ENCODE measurements at regions of chr1 and their contacts with region 1.

Region 1: GRCh38 chr1:41516168-41517061 is 31.9 kb upstream of the EDN2 start:
- DNase-seq: peak; percentile 87
- ATAC-seq: peak; percentile 92
- H3K4me3 Mint-ChIP-seq: peak overlapping the region; percentile 19
- H3K27ac Mint-ChIP-seq: peak overlapping the region; percentile 16
- H3K4me1 Mint-ChIP-seq: peaks cover 11% of the 10 kb centered on the region
- H3K27me3 Mint-ChIP-seq: no peaks in the 10 kb centered on the region

Region 2: DNA sequence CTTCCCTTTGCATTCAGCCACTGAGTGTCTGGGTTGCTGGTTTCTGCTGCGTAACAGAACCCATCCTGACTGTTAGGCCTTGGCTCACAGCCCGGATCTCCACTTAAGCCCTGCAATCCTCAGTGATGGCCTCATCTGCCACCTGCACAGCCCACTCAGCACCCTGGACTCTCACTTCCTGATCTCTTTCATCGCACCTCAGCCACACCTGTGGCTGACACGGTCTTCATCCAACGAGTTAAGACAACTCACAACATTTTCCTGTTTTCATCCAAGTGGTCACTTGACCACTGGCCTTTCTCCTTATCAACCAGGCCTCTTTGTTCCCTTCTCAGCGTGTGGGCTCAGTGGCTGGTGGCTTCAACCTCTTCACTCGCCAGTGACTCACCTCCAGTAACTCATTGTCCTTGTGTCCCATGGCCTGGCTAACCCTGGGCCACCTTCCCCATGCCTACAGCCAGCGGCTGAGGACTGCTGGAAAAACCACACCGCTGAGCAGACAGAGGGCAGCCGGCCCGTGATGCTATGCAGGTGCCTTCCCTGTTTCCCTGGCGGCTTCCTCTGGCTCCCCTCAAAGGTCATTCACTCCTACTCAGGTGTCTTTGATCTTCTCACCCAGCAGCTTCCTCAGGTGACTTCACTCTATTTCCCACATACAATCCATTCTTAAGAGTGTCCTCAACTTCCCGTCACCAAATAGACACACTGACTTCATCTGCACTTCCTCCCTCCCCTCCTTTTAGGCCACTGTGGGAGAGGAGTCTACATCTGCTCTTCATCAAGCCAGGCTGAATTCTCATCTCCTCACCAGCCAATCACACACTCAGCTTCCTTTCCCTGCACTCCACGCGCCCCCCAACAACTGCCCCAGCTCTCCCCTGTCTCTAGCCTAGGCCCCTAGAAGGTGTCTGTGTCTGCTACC is 12.0 kb before region 1 on chr1:
- CTCF ChIA-PET with region 1: interaction called, 12 read pairs
- POLR2A ChIA-PET with region 1: no interaction called
- intact Hi-C with region 1: no loop called
- DNase-seq: no peak
- ATAC-seq: peak; percentile 45
- H3K4me3 Mint-ChIP-seq: no peak overlapping the region
- H3K27ac Mint-ChIP-seq: peak overlapping the region; percentile 40
- H3K4me1 Mint-ChIP-seq: peaks cover 10% of the 10 kb centered on the region
- H3K27me3 Mint-ChIP-seq: no peaks in the 10 kb centered on the region

Region 3: GRCh38 chr1:41573785-41574713 is 57.6 kb after region 1 on chr1:
- CTCF ChIA-PET with region 1: no interaction called
- POLR2A ChIA-PET with region 1: no interaction called
- intact Hi-C with region 1: no loop called
- DNase-seq: peak; percentile 90
- ATAC-seq: peak; percentile 93
- H3K4me3 Mint-ChIP-seq: no peak overlapping the region
- H3K27ac Mint-ChIP-seq: peak overlapping the region; percentile 17
- H3K4me1 Mint-ChIP-seq: peaks cover 41% of the 10 kb centered on the region
- H3K27me3 Mint-ChIP-seq: no peaks in the 10 kb centered on the region

Region 4: DNA sequence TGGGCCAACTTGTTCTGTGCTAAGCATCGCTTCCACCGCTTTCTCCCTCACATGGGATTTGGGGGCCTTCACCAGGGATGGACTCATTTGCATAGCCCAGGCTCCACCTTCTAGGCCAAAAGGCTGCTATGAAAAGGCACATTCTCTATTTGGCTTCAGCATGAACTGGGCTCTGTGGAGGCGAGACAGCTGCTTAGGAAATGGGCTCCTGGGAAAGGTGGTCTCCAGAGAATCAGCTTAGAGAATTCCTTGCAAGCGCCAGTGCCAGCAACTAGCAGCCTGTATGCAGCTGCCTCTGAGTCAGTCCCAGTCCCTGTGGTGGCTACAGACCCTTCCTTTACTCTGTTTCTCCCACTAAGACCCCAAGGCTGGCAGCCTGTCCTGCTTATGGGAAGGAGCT is 187.8 kb after region 1 on chr1:
- CTCF ChIA-PET with region 1: no interaction called
- POLR2A ChIA-PET with region 1: no interaction called
- intact Hi-C with region 1: no loop called
- DNase-seq: no peak
- ATAC-seq: no peak
- H3K4me3 Mint-ChIP-seq: no peak overlapping the region
- H3K27ac Mint-ChIP-seq: no peak overlapping the region
- H3K4me1 Mint-ChIP-seq: peaks cover 11% of the 10 kb centered on the region
- H3K27me3 Mint-ChIP-seq: no peaks in the 10 kb centered on the region

Region 5: GRCh38 chr1:41795205-41795762 is 278.9 kb after region 1 on chr1:
- CTCF ChIA-PET with region 1: no interaction called
- POLR2A ChIA-PET with region 1: no interaction called
- intact Hi-C with region 1: loop called in 1 of 2 experiments (anchors 10 kb)
- DNase-seq: no peak
- ATAC-seq: no peak
- H3K4me3 Mint-ChIP-seq: no peak overlapping the region
- H3K27ac Mint-ChIP-seq: no peak overlapping the region
- H3K4me1 Mint-ChIP-seq: peaks cover 62% of the 10 kb centered on the region
- H3K27me3 Mint-ChIP-seq: no peaks in the 10 kb centered on the region

Region 6: DNA sequence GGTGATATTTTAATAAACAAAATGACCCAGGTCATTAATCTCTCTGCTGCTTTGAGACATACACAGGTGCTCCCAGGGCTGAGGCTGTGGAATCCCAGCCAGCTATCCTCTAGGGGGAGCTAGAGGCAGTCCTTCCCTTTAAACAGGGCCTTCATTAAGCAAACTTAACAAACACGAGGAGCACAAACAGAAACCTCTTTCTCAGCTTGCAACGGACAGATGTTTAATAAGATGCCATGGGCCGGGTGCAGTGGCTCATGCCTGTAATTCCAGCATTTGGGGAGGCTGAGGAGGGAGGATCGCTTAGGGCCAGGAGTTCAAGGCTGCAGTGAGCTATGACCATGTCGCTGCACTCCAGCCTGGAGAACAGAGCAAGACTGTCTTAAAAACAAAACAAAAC is 295.6 kb after region 1 on chr1:
- CTCF ChIA-PET with region 1: no interaction called
- POLR2A ChIA-PET with region 1: no interaction called
- intact Hi-C with region 1: loop called in 1 of 2 experiments (anchors 2 kb)
- DNase-seq: peak; percentile 78
- ATAC-seq: peak; percentile 68
- H3K4me3 Mint-ChIP-seq: no peak overlapping the region
- H3K27ac Mint-ChIP-seq: no peak overlapping the region
- H3K4me1 Mint-ChIP-seq: peaks cover 49% of the 10 kb centered on the region
- H3K27me3 Mint-ChIP-seq: no peaks in the 10 kb centered on the region

Region 7: GRCh38 chr1:41868599-41868998 is 352.2 kb after region 1 on chr1:
- CTCF ChIA-PET with region 1: interaction called, 3 read pairs
- POLR2A ChIA-PET with region 1: no interaction called
- intact Hi-C with region 1: loop called in 1 of 2 experiments (anchors 5 kb)
- DNase-seq: peak; percentile 61
- ATAC-seq: peak; percentile 85
- H3K4me3 Mint-ChIP-seq: no peak overlapping the region
- H3K27ac Mint-ChIP-seq: no peak overlapping the region
- H3K4me1 Mint-ChIP-seq: peaks cover 32% of the 10 kb centered on the region
- H3K27me3 Mint-ChIP-seq: no peaks in the 10 kb centered on the region

Region 8: GRCh38 chr1:41891199-41891896 is 374.9 kb after region 1 on chr1:
- CTCF ChIA-PET with region 1: interaction called, 3 read pairs
- POLR2A ChIA-PET with region 1: no interaction called
- intact Hi-C with region 1: loop called in 1 of 2 experiments (anchors 10 kb)
- DNase-seq: peak; percentile 72
- ATAC-seq: peak; percentile 96
- H3K4me3 Mint-ChIP-seq: peak overlapping the region; percentile 78
- H3K27ac Mint-ChIP-seq: peak overlapping the region; percentile 95
- H3K4me1 Mint-ChIP-seq: peaks cover 50% of the 10 kb centered on the region
- H3K27me3 Mint-ChIP-seq: no peaks in the 10 kb centered on the region

Region 9: GRCh38 chr1:41939194-41939593 is 422.8 kb after region 1 on chr1:
- CTCF ChIA-PET with region 1: no interaction called
- POLR2A ChIA-PET with region 1: no interaction called
- intact Hi-C with region 1: no loop called
- DNase-seq: no peak
- ATAC-seq: no peak
- H3K4me3 Mint-ChIP-seq: no peak overlapping the region
- H3K27ac Mint-ChIP-seq: no peak overlapping the region
- H3K4me1 Mint-ChIP-seq: peaks cover 14% of the 10 kb centered on the region
- H3K27me3 Mint-ChIP-seq: no peaks in the 10 kb centered on the region

Measured in activated CD4-positive, alpha-beta T cell treated with anti-CD3 and anti-CD28 coated beads for 36 hours (primary cell).